A549 (cell line): ENCODE measurements at regions of chr2 and their contacts with region 1.

Region 1: DNA sequence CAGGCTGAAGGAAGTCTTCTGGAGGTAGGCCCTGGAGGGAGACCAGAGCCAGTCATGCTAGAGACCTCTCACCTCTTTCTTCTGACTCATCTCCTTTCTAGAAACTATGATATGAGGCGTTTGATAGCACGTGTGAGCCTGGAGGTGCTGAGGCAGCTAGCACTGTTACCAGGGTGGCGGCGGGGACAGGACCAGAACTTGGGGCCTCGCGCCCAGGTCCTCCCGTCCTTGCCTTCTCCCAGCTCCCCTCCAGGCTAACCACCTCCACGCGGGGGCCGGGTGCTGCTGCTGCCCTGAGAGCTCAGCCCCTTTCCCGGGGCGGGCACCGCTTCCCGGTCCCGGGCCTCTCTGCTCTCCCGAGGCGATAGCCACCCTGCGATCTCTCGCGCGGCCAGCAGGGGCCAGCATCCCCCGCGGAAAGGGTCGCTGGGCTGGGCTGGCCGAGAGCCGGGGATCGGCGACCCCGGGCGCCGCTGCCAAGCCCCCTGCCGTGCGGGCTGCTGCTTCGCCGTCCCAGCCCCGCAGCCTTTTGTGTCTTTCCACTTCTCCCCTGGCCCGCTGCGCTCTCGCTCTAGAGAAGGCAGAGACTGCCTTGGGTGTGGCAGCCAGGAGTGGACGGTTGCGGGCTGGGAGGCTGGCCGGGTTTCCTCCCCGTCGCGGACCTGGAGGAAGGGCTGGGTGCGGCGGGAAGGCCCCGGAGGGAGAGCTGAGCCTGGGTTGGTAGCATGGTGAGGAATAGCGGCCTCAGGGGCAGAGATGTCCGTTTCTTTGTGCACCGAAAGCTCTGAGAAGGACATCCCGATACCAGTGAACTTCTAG is 49.1 kb downstream of the TMEM17 start:
- DNase-seq: peak; percentile 79 to 85
- ATAC-seq: peak; percentile 91 to 96
- H3K4me3 ChIP-seq: peak overlapping the region; percentile 46
- H3K27ac ChIP-seq: peak overlapping the region; percentile 95 to 99
- H3K4me1 ChIP-seq: peaks cover 42% of the 10 kb centered on the region
- CTCF ChIP-seq: peak; percentile 99
- EP300 ChIP-seq: 0 out of 5 replicates have a peak, but pooled peaks of 1 of the 2 experiments have one; percentile 18
- POLR2A ChIP-seq: peak; percentile 28; the same call in 1 of the 2 replicates
- RAD21 ChIP-seq: peak; percentile 97 to 100

Region 2: DNA sequence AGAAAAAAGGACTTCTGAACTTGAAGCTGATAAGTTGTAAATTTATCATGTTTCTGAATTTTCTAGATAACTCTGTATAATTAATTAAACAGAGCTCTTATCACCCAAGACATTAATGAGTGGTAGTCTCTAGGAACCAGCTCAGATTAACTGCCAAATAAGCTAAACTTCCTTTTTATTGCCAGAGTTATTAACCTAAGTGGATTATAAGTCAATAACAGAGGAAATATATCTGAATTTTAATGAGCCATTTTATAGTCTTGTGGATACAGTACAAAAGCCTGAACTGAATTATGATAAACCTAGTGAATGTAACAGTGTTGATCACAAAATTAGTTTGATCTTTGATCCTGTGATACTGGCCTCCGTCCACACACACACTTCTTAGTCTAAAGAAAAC is 440.0 kb before region 1 on chr2:
- CTCF ChIA-PET with region 1: no interaction called
- POLR2A ChIA-PET with region 1: no interaction called
- DNase-seq: no peak
- ATAC-seq: no peak
- H3K4me3 ChIP-seq: no peak overlapping the region
- H3K27ac ChIP-seq: no peak overlapping the region
- H3K4me1 ChIP-seq: no peaks in the 10 kb centered on the region
- CTCF ChIP-seq: no peak
- EP300 ChIP-seq: no peak
- POLR2A ChIP-seq: no peak
- RAD21 ChIP-seq: no peak

Region 3: DNA sequence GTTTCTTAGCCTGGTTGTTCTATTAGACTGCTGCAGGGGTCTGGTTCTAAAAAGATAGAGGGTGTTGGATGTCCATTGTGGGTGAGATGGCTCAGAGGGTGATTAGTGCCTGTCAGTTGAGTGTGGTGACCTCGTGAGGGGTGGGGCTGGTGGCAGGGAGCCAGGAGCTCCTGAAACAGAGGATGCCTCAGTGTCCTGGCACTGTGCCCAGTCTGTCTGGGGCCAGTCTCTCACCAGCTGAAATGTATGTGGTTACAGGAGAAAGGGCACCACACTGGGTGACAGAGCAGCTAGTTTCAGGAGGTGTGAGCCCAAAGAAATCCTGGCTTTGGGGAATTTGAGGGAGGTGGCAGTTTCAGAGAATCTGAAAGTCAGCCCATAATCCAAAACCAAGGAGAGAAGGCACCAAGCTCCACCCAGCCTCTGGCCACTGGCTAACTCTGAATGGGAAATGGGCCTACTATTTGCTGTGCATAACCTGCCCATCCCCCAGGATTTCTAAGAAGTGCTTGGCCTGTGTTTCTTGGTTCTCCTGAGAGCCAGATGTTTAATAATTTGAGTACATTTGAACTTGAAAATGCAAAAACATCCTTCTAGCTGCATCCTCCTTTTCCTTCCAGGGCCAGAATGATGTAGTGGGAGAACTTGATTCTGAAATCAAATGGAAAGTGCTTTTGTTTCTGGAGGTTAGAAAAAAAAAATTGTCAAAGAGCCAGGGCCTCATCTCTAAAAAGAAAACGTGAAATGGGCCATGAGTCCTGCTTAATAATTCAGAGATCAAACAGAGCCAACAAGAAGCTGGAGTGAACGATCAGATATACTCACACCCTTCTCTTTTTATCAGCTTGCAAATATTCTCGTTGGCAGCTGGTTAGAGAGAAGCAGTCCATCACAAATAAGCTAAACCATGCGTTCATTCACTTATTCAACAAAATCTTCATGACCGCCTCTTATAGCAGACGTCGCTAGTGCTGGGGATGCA is 168.7 kb before region 1 on chr2:
- CTCF ChIA-PET with region 1: no interaction called
- POLR2A ChIA-PET with region 1: no interaction called
- DNase-seq: peak in 1 of 2 experiments; percentile 51
- ATAC-seq: peak; percentile 47 to 63; a peak in 4 of 6 replicates
- H3K4me3 ChIP-seq: no peak overlapping the region
- H3K27ac ChIP-seq: no peak overlapping the region
- H3K4me1 ChIP-seq: peaks cover 9% of the 10 kb centered on the region
- CTCF ChIP-seq: no peak
- EP300 ChIP-seq: no peak
- POLR2A ChIP-seq: no peak
- RAD21 ChIP-seq: no peak

Region 4: DNA sequence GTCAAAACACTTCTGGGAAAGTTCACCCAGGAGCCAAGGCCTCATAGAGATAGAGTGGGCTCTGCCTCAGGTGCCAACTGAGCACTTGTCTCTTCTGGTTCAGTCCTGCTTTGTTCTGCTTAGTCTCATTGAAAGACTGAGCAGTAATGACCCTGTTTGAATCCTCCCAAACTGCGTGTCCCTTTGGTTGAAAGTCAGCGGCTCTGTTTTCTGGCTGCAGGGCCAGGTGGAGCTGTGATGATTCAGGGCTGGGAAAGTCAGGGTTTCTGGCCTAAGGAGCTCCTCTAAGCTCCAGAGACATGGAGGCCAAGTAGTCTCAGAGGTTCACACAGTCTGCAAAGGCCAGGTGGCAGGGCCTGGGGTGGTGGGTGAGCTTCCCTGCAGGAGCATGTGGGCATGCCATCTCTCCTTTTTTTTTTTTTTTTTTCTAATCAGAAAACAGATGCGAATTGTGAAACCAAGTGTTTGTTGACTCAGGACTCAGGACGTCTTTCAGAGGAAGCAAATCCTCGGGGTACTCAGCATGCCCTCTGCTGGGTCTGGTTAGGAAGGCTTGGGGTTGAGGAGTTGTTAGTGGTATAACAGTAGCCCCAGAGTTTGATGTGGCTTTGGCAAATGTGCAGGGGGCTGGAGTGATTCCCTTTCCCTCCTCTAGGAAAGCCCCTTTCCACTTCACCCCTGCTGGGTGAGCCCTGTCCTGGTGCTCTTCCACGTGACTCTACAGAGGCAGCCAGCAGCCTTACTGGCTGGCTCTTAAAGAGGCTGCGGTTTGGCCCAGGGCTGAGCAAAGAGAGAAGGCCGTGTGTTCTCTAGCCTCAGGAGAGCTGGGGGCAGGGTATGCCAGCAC is 10.8 kb after region 1 on chr2:
- CTCF ChIA-PET with region 1: interaction called, 59 read pairs
- POLR2A ChIA-PET with region 1: no interaction called
- DNase-seq: peak; percentile 25 to 41
- ATAC-seq: peak; percentile 36 to 67; a peak in 4 of 6 replicates
- H3K4me3 ChIP-seq: no peak overlapping the region
- H3K27ac ChIP-seq: peak overlapping the region; percentile 14 to 79; a peak in 5 of 6 replicates
- H3K4me1 ChIP-seq: peaks cover 11% of the 10 kb centered on the region; the same call in 2 of the 3 replicates
- CTCF ChIP-seq: no peak
- EP300 ChIP-seq: no peak
- POLR2A ChIP-seq: no peak
- RAD21 ChIP-seq: no peak

Region 5: DNA sequence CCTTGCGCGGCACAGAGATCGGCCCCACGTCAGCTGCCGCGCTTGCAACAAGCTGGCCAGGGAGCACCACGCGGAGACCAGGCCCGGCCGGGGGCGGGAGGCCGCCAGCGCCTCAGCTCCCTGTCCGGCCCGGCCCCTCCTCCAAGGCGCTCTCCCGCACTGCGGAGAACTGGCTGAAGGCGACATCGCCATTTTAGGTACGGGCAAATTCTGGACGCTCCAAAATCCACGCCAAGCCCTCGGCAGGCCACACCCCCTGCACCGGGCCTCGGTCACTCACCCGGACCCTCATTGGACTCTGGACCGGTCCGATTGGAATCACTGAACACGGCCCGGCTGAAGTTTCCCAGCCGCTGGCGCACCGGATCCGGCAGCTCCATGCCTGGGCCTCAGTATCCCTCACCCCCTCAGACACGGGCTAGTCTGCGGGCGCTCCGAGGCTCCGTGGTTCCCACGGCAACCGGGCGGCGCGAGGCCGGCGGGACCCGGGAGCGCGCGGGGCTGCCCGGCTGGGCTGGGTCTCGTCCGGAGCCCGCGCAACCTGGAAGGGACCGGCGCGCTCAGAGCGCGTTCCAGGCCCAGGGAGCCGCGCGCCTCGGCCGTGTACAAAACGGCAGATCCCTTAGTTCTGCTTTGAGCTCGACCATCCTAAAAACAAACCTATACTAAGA is 49.0 kb after region 1 on chr2 and contains the start of gene TMEM17:
- CTCF ChIA-PET with region 1: interaction called, 24 read pairs
- POLR2A ChIA-PET with region 1: interaction called, 22 read pairs
- DNase-seq: peak; percentile 81 to 97
- ATAC-seq: peak; percentile 92 to 94
- H3K4me3 ChIP-seq: peak within 1 kb of the TSS; percentile 44
- H3K27ac ChIP-seq: peak within 1 kb of the TSS; percentile 83 to 93
- H3K4me1 ChIP-seq: peaks cover 26% of the 10 kb centered on the region
- CTCF ChIP-seq: no peak
- EP300 ChIP-seq: no peak
- POLR2A ChIP-seq: peak; percentile 72
- RAD21 ChIP-seq: peak in 1 of 2 experiments; percentile 36; a peak in 3 of 5 replicates
- polyA plus RNA-seq, gene TMEM17: 7.9 and 10.2 TPM in 2 replicates

Region 6: GRCh38 chr2:62705007-62705829 is 248.3 kb after region 1 on chr2 and contains the start of gene EHBP1:
- CTCF ChIA-PET with region 1: interaction called, 15 read pairs
- POLR2A ChIA-PET with region 1: interaction called, 17 read pairs
- DNase-seq: peak; percentile 98 to 100
- ATAC-seq: peak; percentile 91 to 96
- H3K4me3 ChIP-seq: peak within 1 kb of the TSS; percentile 68
- H3K27ac ChIP-seq: peak within 1 kb of the TSS; percentile 94 to 97
- H3K4me1 ChIP-seq: peaks cover 22% of the 10 kb centered on the region
- CTCF ChIP-seq: no peak
- EP300 ChIP-seq: no peak
- POLR2A ChIP-seq: peak; percentile 91
- RAD21 ChIP-seq: peak in 1 of 2 experiments; percentile 29; a peak in 1 of 5 replicates
- polyA plus RNA-seq, gene EHBP1: 145 and 204 TPM in 2 replicates

Region 7: GRCh38 chr2:62765619-62766376 is 308.9 kb after region 1 on chr2:
- CTCF ChIA-PET with region 1: interaction called, 318 read pairs
- POLR2A ChIA-PET with region 1: no interaction called
- DNase-seq: no peak
- ATAC-seq: no peak; a peak in 1 of 6 replicates
- H3K4me3 ChIP-seq: no peak overlapping the region
- H3K27ac ChIP-seq: 0 out of 6 replicates have a peak overlapping the region, but pooled peaks of 1 of the 2 experiments have one; percentile 7
- H3K4me1 ChIP-seq: peaks cover 46% of the 10 kb centered on the region
- CTCF ChIP-seq: no peak
- EP300 ChIP-seq: no peak
- POLR2A ChIP-seq: no peak
- RAD21 ChIP-seq: no peak

Region 8: DNA sequence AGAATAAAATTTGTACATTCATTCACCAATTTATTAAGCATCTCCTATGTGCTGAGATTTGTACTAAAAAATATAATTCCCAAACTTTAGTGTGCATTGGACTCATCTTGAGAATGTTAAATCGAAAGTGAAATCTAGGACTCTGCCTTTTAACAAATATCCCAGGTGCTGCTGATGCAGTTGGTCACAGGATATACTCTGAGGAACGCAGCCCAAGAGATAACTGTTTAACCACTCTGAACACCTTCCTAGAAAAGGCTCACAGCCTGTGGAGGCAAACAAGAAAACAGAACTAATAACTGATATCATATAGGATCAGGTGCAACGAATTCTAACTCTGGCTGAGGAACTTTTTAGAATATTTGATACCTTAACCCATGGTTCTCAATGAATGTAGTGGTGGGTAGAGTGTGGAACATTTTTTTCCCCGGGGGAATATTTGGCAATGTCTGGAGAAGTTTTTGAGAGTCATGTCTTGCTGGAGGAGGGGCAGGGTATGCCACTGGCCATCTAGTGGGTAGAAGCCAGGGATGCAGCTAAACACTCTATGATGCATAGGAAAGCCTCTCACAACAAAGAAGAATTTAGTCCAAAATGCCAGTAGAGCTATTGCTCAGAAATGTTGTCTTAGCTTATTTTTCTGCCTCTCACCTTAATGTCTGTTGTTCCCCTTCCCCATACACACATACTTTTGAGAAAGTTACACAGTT is 345.0 kb after region 1 on chr2:
- CTCF ChIA-PET with region 1: interaction called, 13 read pairs
- POLR2A ChIA-PET with region 1: no interaction called
- DNase-seq: peak; percentile 48 to 61
- ATAC-seq: peak; percentile 96 to 98
- H3K4me3 ChIP-seq: peak overlapping the region; percentile 1; the same call in 1 of the 3 replicates
- H3K27ac ChIP-seq: peak overlapping the region; percentile 11 to 54; a peak in 5 of 6 replicates
- H3K4me1 ChIP-seq: peaks cover 28% of the 10 kb centered on the region
- CTCF ChIP-seq: peak; percentile 38; the same call in 2 of the 3 replicates
- EP300 ChIP-seq: no peak
- POLR2A ChIP-seq: no peak
- RAD21 ChIP-seq: peak; percentile 24; a peak in 3 of 5 replicates